ENCODE measurements at regions of chr15 and their contacts with region 1.

Region 1: GRCh38 chr15:60916679-60917460 is 312.2 kb downstream of the RORA start:
- DNase-seq: peak; percentile 94
- H3K4me3 ChIP-seq: peak overlapping the region in 3 of 4 donors; percentile 6 to 19 (median 18)
- H3K27ac ChIP-seq: peak overlapping the region; percentile 69 to 80 (median 76)
- H3K4me1 ChIP-seq: peaks cover 0 to 44% (median 35%) of the 10 kb centered on the region in 4 donors
- H3K27me3 ChIP-seq: no peaks in the 10 kb centered on the region
- CTCF ChIP-seq: peak; percentile 68 to 86 (median 74)
- EP300 ChIP-seq: no peak
- POLR2A ChIP-seq: no peak

Region 2: DNA sequence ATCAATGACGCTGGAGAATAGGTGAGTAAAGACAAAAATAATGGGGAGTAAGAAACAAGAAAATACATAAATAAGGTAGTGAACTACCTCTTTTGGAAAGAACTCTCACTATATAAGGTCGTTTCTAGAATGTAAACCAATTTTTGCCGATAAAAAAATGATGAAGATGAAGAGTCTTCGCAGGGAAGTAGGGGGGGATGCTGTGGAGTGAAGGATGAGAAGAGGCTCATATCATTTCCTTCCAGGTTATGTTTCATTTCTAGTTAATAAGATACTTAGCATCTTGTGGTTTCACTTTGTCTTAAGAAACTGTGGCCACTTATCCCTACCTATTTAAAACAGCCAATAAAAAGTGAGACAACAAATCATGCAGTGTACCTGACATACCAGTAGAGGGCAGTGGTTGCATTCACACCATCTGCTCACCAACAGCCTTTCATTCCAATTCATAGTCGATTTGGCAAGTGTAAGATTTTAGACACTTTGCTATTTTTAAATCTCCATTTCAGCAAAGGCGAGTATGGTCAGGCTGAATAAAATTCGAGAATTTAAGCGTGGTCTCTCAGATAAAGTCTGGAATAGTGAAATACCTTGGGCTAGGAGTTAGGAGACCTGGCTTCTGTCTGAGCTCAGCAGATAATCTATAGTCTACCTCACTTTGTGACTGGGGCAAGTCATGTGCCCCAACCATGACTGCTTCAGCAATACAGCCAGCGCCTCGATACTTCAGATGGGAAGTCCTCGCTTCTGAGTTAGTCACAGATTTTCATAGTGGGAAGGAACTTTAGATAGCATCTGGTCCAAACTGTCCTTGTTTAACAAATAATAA is 409.1 kb before region 1 on chr15:
- intact Hi-C with region 1: loop called (anchors 5 kb)
- DNase-seq: peak; percentile 69
- H3K4me3 ChIP-seq: no peak overlapping the region
- H3K27ac ChIP-seq: peak overlapping the region in 1 of 4 donors; percentile 22
- H3K4me1 ChIP-seq: peaks cover 0 to 4% (median 0%) of the 10 kb centered on the region in 4 donors
- H3K27me3 ChIP-seq: no peaks in the 10 kb centered on the region
- CTCF ChIP-seq: peak; percentile 67 to 91 (median 77)
- EP300 ChIP-seq: no peak
- POLR2A ChIP-seq: no peak

Region 3: DNA sequence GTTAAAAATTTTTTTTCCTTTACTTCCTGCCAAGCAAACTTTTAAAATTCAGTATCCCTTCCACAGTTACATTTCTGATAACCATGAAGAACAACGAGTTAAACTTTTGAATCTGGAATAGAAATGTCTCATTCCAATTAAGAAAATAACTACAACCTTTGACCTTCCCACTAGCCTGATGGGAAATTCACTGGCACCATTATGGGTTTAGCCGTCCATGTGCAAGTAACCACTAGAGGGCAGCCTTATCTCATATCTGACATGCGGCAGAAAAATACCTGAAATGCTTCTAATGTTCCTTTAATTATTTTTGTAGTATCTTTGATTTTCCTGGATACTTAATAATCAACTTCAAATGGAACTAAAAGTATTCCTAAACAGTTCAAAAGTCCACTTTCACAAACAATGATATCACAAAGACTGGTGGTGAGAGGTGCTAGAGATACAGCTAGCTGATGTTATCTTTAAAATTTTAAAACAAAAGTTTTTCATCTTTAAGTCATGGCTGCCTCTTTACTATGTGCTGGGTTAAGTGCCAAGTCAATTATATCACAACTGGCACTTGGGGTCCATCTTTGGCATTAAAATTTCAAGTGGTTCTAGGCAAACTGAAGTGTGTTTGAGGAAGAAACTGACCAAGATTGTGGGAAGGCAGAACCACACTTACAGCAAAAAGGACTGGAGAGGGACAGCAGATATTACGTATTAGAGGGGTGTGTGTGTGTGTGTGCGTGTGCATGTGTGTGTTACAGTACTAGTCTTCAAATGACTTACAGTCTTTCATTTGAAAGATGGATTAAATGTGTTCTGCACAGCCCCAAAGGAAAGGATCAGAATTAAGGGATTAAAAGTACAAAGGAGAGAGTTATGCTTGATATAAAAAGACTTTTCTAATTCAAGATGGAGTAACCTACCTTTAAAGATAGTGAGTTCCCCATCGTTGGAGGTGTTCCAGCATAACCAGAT is 330.8 kb before region 1 on chr15:
- intact Hi-C with region 1: loop called (anchors 1 kb)
- DNase-seq: no peak
- H3K4me3 ChIP-seq: no peak overlapping the region
- H3K27ac ChIP-seq: peak overlapping the region in 1 of 4 donors; percentile 16
- H3K4me1 ChIP-seq: peaks cover 0 to 38% (median 22%) of the 10 kb centered on the region in 4 donors
- H3K27me3 ChIP-seq: no peaks in the 10 kb centered on the region
- CTCF ChIP-seq: peak; percentile 41 to 89 (median 84)
- EP300 ChIP-seq: no peak
- POLR2A ChIP-seq: no peak

Region 4: DNA sequence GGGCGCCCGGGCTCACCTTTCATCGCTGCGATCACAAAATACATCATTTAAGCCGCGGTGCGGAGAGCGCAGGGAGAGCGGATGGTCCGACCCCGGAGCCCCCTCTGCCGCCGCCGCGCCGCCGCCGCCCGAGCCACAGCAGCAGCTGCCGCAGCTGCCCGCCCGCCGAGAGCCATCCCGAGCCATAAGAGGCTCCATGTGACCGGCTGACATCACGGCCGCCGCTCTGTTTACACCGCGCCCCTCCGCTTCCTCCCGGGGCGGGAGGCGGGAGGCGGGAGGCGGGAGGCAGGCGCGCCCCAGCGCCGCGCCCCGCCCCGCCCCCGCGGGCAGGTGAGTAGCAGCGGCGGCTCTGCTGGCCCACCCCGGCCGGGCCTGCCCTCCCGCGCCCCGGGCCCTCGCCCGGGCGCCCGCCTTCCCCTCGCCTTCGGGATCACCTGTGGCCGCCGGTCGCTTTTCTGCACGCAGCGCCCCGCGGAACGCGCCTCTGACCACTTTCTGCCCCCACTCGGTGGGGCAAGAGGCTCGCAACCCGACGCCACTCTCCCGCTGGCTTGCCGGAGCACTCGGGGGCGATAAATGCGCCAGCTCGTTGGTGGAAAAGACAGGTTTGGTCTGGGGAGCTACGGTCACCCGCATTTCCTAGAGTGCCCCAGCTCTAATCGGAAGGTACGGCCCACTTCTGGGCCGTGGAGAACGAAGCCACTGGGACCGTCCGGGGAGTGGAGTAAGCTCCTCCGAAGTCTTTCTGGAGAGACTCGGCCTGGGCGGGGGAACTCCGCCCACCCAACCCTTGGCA is 324.3 kb before region 1 on chr15:
- intact Hi-C with region 1: loop called (anchors 2 kb)
- DNase-seq: peak; percentile 94
- H3K4me3 ChIP-seq: peak overlapping the region; percentile 73 to 93 (median 81)
- H3K27ac ChIP-seq: peak overlapping the region; percentile 84 to 95 (median 90)
- H3K4me1 ChIP-seq: peaks cover 0 to 23% (median 14%) of the 10 kb centered on the region in 4 donors
- H3K27me3 ChIP-seq: no peaks in the 10 kb centered on the region
- CTCF ChIP-seq: no peak
- EP300 ChIP-seq: peak in 1 of 4 donors; percentile 10
- POLR2A ChIP-seq: peak in 1 of 2 donors; percentile 23

Region 5: GRCh38 chr15:60660290-60661051 is 256.4 kb before region 1 on chr15:
- intact Hi-C with region 1: loop called (anchors 10 kb)
- DNase-seq: no peak
- H3K4me3 ChIP-seq: no peak overlapping the region
- H3K27ac ChIP-seq: peak overlapping the region; percentile 23 to 67 (median 57)
- H3K4me1 ChIP-seq: peaks cover 0 to 19% (median 12%) of the 10 kb centered on the region in 4 donors
- H3K27me3 ChIP-seq: no peaks in the 10 kb centered on the region
- CTCF ChIP-seq: no peak
- EP300 ChIP-seq: no peak
- POLR2A ChIP-seq: no peak

Region 6: DNA sequence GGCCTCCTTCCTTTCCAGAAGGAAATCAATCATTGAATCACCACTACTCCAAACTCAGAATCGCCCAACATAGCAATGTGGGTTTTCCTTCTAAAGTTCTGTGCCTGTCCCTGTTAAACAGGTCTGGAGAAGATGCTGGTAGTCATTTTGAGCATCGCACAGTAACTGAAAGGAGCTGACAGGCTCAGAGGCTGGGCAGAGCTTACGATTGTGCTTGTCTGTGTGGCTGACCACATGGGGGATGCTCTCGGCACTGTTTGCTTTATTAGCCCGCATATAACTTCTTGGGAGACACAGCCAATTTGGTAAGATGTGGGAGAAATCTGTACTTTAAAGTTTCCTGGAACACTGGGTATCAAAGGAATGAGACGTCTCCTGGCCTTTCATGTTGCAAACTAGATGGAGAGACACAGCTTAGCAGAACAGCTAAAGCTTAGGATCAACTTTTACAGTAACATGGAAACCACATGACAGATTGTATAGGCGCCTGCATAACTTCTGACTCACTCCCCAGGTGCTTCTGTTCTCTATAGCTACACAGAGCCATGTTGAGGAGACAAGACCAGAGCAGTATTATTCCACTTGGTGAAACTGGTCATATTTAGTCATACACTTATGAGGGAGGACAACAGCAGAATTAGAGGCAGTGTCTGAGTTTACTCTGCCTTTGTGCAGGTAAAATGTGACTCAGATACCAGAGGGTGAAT is 61.9 kb before region 1 on chr15:
- intact Hi-C with region 1: no loop called
- DNase-seq: no peak
- H3K4me3 ChIP-seq: no peak overlapping the region
- H3K27ac ChIP-seq: no peak overlapping the region
- H3K4me1 ChIP-seq: no peaks in the 10 kb centered on the region
- H3K27me3 ChIP-seq: no peaks in the 10 kb centered on the region
- CTCF ChIP-seq: no peak
- EP300 ChIP-seq: no peak
- POLR2A ChIP-seq: no peak

Region 7: GRCh38 chr15:61051569-61052031 is 134.7 kb after region 1 on chr15:
- intact Hi-C with region 1: loop called (anchors 5 kb)
- DNase-seq: peak; percentile 71
- H3K4me3 ChIP-seq: no peak overlapping the region
- H3K27ac ChIP-seq: peak overlapping the region in 3 of 4 donors; percentile 57 to 64 (median 57)
- H3K4me1 ChIP-seq: peaks cover 0 to 36% (median 21%) of the 10 kb centered on the region in 4 donors
- H3K27me3 ChIP-seq: no peaks in the 10 kb centered on the region
- CTCF ChIP-seq: peak; percentile 11 to 61 (median 45)
- EP300 ChIP-seq: no peak
- POLR2A ChIP-seq: no peak

Measured in sigmoid colon (tissue), 7 donors.